RWPE1 (cell line): ENCODE measurements at regions of chr11 and their contacts with region 1.

Region 1: GRCh38 chr11:104858882-104859775 is 39.1 kb downstream of the CASP12 start:
- DNase-seq: no peak
- H3K27ac ChIP-seq: no peak overlapping the region
- CTCF ChIP-seq: no peak

Region 2: DNA sequence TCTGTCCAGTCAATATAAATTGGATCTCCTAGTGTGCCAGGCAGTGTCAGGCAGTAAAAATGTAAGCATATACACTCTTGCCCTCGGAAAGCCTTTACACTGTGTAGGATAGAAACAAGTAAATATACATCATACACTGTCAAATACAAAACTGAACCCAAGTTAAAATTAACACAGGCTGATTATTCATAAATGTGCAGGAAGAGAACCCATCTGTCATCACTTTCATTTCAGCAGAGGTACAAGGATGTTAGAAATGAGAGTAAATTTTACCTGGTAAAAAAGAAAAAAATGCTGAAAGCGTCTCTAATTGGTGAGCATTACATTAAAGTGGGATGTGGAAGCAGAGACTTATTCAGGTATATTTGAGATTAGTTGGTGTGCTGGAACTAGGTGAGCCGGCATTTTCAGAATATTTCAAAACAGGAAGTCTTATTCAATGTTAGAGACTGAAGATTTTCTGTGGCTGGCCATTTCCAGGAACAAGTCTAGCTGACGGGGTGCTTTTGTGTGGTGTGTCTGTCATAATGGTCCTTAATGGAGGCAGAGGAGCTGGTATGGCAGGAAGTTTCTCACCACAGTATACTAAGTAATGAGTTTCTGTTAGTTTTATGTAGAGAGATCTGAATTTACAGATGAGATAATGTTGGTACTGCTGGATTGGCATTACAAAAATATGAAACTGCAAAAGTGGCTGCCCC is 153.5 kb before region 1 on chr11:
- CTCF ChIA-PET with region 1: no interaction called
- POLR2A ChIA-PET with region 1: interaction called, 12 read pairs
- DNase-seq: no peak
- H3K27ac ChIP-seq: no peak overlapping the region
- CTCF ChIP-seq: no peak